Panc1 (cell line): ENCODE measurements at regions of chr2 and their contacts with region 1.

Region 1: GRCh38 chr2:95058989-95059641 is 33.6 kb downstream of the MAL start:
- DNase-seq: no peak
- ATAC-seq: no peak
- H3K4me3 ChIP-seq: no peak overlapping the region
- H3K27ac ChIP-seq: no peak overlapping the region
- H3K4me1 ChIP-seq: no peaks in the 10 kb centered on the region
- H3K27me3 ChIP-seq: peaks cover 8% of the 10 kb centered on the region
- CTCF ChIP-seq: no peak

Region 2: DNA sequence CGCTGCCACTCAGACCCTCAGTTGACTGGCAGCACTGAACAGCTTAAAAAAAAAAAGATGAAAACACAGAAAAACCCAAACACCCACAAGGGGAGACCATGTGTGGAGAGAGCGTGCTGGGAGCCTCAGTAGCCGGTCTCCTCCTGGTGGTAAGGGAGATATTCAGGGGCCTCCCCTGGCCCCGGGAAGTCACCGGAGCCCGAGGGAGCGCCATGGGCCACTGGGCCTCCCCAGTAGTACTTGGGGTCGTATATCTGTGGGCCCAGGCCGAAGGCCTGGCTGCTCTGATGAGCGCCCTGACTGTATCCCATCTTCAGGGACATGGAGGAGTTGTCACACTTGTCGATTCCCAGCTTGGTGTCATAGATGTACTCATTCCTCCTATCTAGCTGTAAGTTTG is 333.6 kb before region 1 on chr2:
- CTCF ChIA-PET with region 1: no interaction called
- POLR2A ChIA-PET with region 1: no interaction called
- in situ Hi-C with region 1: no loop called
- intact Hi-C with region 1: no loop called
- DNase-seq: no peak
- ATAC-seq: no peak
- H3K4me3 ChIP-seq: no peak overlapping the region
- H3K27ac ChIP-seq: no peak overlapping the region
- H3K4me1 ChIP-seq: no peaks in the 10 kb centered on the region
- H3K27me3 ChIP-seq: no peaks in the 10 kb centered on the region
- CTCF ChIP-seq: no peak

Region 3: GRCh38 chr2:95015261-95015912 is 43.7 kb before region 1 on chr2:
- CTCF ChIA-PET with region 1: no interaction called
- POLR2A ChIA-PET with region 1: interaction called, 11 read pairs
- in situ Hi-C with region 1: no loop called
- intact Hi-C with region 1: no loop called
- DNase-seq: no peak
- ATAC-seq: no peak
- H3K4me3 ChIP-seq: no peak overlapping the region
- H3K27ac ChIP-seq: no peak overlapping the region
- H3K4me1 ChIP-seq: no peaks in the 10 kb centered on the region
- H3K27me3 ChIP-seq: no peaks in the 10 kb centered on the region
- CTCF ChIP-seq: no peak

Region 4: DNA sequence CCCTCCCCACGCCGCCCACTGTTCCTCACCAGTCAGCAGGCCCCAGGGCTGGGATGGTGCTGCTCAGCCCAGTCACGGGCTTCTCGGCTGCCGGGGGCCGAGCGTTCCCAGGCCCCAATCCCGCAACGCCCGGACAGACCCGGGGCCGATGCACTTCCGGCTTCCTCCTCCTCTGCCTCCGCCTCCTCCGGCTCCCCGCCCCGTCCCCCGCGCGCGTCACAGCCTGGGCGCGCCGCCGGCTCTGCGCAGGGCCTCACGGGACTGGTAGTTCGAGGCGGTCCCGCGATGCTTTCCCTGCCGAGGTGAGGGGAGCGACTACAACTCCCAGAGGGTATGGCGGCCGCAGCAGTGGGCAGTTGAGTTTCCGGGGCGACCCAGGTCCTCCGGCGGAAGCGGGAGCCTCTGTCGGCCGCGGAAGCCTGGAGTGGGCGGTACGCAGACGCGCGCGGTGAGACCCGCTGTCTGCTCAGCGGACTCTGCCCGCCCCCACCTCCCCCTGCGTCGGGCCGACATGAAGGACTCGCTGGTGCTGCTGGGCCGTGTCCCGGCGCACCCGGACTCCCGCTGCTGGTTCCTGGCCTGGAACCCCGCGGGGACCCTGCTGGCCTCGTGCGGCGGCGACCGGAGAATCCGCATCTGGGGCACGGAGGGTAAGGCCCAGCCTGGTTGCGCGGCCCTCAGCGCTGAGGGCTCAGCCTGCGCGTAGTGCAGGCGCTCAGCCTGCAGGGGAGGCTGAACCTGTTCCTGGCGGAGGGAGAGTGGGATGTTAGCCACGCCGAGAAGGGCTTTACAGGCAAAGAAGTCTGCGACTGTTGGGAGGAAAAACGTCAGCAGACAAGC is 1206.9 kb after region 1 on chr2 and contains the starts of genes CIAO1 and TMEM127:
- CTCF ChIA-PET with region 1: no interaction called
- POLR2A ChIA-PET with region 1: no interaction called
- in situ Hi-C with region 1: no loop called
- intact Hi-C with region 1: no loop called
- DNase-seq: peak; percentile 74
- ATAC-seq: peak; percentile 98
- H3K4me3 ChIP-seq: peak within 1 kb of the TSS; percentile 61 to 94
- H3K27ac ChIP-seq: peak within 1 kb of the TSS; percentile 77
- H3K4me1 ChIP-seq: peaks cover 27% of the 10 kb centered on the region
- H3K27me3 ChIP-seq: no peaks in the 10 kb centered on the region
- CTCF ChIP-seq: no peak
- total RNA-seq, gene CIAO1: 85.5 TPM
- total RNA-seq, gene TMEM127: 63.1 TPM